Ascending aorta (tissue), 2 donors: ENCODE measurements at regions of chrX and their contacts with region 1.

Region 1: GRCh38 chrX:53071604-53072417 is 10.4 kb upstream of the TSPYL2 start:
- DNase-seq: peak; percentile 64 to 89
- H3K4me3 ChIP-seq: peak overlapping the region; percentile 31 to 60
- H3K27ac ChIP-seq: peak overlapping the region; percentile 66 to 73
- H3K4me1 ChIP-seq: no peaks in the 10 kb centered on the region
- H3K27me3 ChIP-seq: no peaks in the 10 kb centered on the region
- CTCF ChIP-seq: peak; percentile 61 to 71 (median 63)

Region 2: DNA sequence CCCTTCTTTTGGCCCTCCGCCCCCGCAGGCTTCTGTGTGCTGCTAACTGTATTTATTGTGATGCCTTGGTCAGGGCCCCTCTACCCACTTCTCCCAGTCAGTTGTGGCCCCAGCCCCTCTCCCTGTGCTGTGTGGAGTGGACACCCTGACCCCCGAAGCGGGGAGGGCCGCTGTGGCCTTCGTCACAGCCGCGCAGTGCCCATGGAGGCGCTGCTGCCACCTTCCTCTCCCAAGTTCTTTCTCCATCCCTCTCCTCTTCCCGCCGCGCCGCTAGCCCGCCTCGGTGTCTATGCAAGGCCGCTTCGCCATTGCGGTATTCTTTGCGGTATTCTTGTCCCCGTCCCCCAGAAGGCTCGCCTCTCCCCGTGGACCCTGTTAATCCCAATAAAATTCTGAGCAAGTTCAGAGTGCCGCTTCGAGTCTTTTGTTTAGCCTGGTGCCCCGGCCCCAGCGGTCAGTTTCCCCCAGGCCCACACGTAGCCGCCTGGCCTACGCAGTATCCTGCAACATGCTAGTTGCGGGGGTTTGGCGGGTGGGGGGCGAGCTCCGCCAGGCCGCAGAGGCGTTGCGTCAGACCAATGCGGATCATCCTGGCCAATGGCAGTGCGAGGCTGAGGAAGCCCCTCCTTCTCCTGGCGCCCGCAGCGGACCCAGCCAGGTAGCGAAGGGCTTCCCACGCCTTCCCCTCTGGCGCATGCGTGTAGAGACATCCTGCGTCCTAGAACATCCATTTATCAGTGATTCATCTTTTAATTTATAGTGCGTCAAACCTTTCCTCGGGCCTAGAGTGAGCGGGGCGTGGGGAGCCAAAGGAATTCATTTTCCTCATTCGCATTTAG is 16.5 kb after region 1 on chrX:
- intact Hi-C with region 1: loop called (anchors 1 kb)
- DNase-seq: peak; percentile 66 to 88
- H3K4me3 ChIP-seq: peak overlapping the region; percentile 38 to 60
- H3K27ac ChIP-seq: peak overlapping the region; percentile 82 to 96
- H3K4me1 ChIP-seq: peaks cover 0 to 2% of the 10 kb centered on the region in 2 donors
- H3K27me3 ChIP-seq: no peaks in the 10 kb centered on the region
- CTCF ChIP-seq: no peak